Dorsolateral prefrontal cortex (tissue), 120 donors: ENCODE measurements at regions of chr4 and their contacts with region 1.

Region 1: DNA sequence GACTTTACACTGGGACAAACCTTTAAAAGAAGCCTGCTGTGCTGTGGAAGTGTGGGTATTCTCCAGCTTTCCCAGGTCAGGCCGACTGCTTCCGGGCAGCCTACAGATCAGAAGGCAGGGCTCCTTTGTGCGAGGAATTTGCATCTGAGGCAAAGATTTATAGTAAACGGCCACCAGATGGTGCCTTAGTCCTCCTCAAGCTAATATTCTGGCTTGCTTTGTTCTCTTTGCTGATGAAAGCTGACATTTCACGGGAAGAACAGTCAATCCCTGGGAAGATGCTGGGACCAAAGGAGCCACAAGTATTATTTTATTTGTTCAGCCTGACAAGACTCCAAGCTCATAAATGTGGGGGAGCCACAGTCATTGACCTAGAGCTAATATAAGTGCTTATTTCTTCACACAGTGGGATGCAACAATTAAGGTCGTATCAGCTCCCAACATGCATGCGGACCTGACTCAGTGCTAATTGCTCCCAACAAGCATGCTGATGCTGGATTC is 120.7 kb upstream of the TRIM2 start:
- DNase-seq: peak in 9 of 10 donors; percentile 42 to 74 (median 59)
- H3K4me3 ChIP-seq: peak overlapping the region in 4 of 59 donors; percentile 4 to 12 (median 6)
- H3K27ac ChIP-seq: peak overlapping the region in 57 of 59 donors; percentile 10 to 100 (median 97)
- H3K27me3 ChIP-seq: no peaks in the 10 kb centered on the region
- CTCF ChIP-seq: peak; percentile 60 to 93 (median 81)

Region 2: GRCh38 chr4:151604238-151604637 is 1479.3 kb before region 1 on chr4:
- intact Hi-C with region 1: no loop called
- DNase-seq: no peak
- H3K4me3 ChIP-seq: no peak overlapping the region
- H3K27ac ChIP-seq: no peak overlapping the region
- H3K27me3 ChIP-seq: no peaks in the 10 kb centered on the region
- CTCF ChIP-seq: peak in 54 of 56 donors; percentile 12 to 59 (median 45)

Region 3: DNA sequence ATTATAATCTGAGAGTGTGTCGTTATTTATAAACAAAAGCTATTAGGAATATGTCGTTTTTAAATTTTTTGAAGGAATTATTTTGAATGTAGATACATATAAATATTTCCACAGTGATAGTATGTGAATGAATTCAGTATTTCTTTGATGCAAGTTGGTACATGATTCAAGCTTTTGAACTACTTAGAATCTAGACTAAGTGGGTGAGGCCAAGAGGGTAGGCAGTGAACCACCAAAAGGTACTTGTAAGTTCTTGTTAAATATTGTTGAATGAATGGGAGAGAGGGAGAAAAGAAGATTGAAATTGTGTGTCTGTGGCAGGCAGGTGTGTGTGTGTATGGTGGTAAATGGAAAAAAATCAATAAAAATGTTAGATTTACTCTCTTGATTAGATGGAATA is 234.1 kb before region 1 on chr4:
- intact Hi-C with region 1: loop called (anchors 2 to 5 kb)
- DNase-seq: no peak
- H3K4me3 ChIP-seq: no peak overlapping the region
- H3K27ac ChIP-seq: no peak overlapping the region
- H3K27me3 ChIP-seq: no peaks in the 10 kb centered on the region
- CTCF ChIP-seq: no peak

Region 4: DNA sequence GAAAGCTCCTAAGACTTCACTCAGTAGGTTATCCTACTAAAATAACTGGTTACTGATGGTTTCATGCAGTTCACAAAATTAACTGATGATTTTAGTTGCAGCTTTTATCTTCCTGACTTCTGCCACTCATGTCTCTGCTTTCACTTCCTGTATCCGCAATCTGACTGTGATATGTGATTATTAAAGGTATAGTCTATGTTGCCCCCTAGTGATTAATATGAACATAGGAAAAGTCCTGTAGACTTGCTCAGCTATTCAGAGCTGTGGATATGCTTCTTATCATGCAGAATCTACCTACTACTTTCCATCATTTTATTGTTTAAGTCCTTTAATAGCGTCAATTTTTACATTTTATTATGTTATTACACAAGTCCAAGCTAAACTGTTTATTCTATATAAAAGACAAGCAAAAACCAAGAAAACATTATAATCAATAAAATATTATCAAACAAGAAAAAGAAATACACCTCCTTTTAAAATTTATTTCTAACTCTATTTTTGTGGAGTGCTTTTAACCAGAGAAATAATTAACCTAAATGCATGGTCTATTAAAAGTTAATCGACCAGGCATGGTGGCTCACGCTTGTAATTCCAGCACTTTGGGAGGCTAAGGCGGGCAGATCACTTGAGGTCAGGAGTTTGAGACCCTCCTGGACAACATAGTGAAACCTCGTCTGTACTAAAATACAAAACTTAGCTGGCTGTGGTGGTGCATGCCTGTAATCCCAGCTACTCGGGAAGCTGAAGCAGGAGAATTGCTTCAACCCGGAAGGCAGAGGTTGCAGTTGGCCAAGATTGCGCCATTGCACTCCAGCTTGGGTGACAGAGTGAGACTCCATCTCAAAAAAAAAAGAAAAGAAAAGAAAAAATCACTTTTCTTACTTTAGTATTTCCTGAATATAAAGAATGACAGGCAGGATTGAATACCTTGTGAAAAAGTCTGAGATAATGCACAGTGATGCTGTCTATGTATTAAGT is 560.2 kb after region 1 on chr4:
- intact Hi-C with region 1: loop called in 1 of 2 experiments (anchors 10 kb)
- DNase-seq: no peak
- H3K4me3 ChIP-seq: peak overlapping the region in 2 of 59 donors; percentile 3 to 14
- H3K27ac ChIP-seq: no peak overlapping the region
- H3K27me3 ChIP-seq: no peaks in the 10 kb centered on the region
- CTCF ChIP-seq: peak in 46 of 56 donors; percentile 5 to 74 (median 45)